Activated CD4-positive, alpha-beta memory T cell treated with anti-CD3 and anti-CD28 coated beads for 36 hours (primary cell): ENCODE measurements at regions of chr1 and their contacts with region 1.

Region 1: DNA sequence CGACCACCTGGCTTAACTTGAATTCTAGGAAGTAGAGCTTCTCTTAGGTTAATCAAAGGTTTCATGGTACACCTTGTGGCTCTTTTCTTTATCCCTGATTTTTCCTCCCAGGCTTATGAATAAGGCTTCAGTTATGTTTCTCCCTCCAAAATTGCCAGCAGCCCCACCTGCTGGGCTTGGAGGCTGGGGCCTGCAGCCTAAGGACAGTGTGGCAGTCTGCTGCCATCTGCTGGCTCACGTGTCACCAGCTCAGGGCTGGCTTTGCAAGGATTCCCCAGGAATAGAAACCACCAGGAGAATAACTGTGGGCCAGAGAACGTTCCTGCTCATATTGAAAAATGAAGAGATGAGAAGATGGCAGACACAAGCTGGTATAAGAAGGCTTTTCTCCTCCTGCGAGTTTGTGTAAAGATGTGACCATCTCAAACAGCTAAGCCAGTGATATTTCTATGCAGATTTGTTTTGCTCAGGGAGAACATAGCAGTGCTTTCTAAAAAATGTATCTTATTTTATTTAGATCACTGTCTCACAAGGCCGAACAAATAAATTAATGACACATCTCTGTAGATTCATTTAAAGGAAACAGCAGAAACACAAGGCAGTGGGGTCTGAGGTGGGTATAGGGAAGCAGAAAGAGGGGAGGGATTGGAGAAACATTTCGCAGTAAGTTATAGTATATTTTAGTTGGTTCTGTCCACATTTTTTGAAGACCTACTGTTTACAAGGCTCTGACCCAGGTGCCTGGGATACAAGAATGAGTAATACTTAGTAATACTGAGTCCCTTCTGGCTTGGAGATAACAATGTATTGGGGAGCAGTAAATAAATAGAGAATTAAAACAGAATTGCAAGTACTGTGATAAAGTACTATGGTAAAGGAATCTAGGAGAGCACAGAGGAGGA is 291.1 kb upstream of the SGIP1 start:
- DNase-seq: peak; percentile 84
- H3K4me3 Mint-ChIP-seq: no peak overlapping the region
- H3K27ac Mint-ChIP-seq: no peak overlapping the region
- H3K4me1 Mint-ChIP-seq: no peaks in the 10 kb centered on the region
- H3K27me3 Mint-ChIP-seq: peaks cover 6% of the 10 kb centered on the region

Region 2: DNA sequence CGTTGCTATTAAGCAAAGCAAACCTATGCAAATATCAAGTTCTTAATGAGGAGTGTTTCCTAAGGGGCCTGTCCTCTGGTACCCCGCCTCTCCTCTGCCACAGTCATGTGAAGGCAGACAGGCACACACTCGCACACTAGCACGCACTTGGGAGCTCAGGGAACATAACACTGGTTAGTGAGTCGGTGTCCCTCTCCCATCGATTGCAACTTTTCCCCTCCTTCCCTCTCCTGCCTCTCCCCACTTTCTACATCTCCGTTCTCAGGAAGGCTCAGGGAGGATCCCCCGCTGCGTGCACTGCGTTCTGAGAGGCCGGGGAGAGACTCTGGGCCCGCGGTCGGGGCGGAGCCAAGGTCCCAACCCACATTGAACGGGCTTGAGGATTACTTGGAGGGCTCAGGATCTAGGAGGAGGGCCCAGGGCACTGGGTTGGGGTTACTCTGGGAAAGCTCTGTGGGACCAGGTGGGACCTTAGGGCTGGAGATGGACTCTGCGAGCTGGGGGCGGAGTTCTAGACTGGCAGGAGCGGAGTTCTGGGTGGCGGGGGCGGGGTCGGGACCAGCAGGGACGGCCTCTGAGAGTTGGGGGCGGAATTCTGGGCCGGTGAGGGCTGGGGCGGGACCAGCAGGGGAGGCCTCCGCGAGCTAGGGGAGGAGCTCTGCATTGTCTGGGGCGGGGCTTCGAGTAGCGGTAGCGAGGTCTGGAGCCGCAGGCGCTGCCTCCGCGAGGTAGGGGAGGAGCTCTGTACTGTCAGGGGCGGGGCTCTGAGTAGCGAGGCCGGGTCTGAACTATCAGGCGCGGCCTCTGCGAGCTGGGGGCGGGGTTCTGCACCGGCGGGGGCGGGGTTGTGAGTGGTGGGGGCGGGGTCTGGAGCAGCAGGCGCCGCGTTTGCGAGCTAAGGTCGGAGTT is 823.0 kb before region 1 on chr1:
- CTCF ChIA-PET with region 1: no interaction called
- POLR2A ChIA-PET with region 1: no interaction called
- intact Hi-C with region 1: loop called (anchors 5 kb)
- DNase-seq: peak; percentile 99
- H3K4me3 Mint-ChIP-seq: peak overlapping the region; percentile 90
- H3K27ac Mint-ChIP-seq: peak overlapping the region; percentile 88
- H3K4me1 Mint-ChIP-seq: peaks cover 21% of the 10 kb centered on the region
- H3K27me3 Mint-ChIP-seq: no peaks in the 10 kb centered on the region

Region 3: GRCh38 chr1:65985393-65986066 is 257.4 kb before region 1 on chr1:
- CTCF ChIA-PET with region 1: interaction called, 27 read pairs
- POLR2A ChIA-PET with region 1: no interaction called
- intact Hi-C with region 1: no loop called
- DNase-seq: no peak
- H3K4me3 Mint-ChIP-seq: no peak overlapping the region
- H3K27ac Mint-ChIP-seq: no peak overlapping the region
- H3K4me1 Mint-ChIP-seq: no peaks in the 10 kb centered on the region
- H3K27me3 Mint-ChIP-seq: peaks cover 8% of the 10 kb centered on the region

Region 4: DNA sequence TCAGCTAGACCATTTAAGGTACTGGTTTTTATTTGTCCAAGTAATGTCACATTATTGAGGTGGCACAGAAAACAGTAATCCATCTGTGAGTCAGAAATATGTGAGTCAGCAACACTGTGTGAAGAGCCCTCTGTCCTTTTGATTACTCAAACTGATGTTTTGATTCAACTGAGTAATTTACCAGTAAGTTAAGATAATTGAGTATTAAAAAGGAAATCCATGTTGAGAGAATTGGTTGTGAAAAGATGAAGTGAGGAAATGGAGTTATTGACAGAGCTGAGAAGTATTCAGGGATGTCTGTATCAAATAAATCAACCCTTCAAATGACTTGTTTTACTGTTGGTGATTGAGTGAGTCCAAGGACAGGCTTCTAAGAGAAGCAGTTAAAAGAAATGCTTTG is 11.7 kb before region 1 on chr1:
- CTCF ChIA-PET with region 1: interaction called, 36 read pairs
- POLR2A ChIA-PET with region 1: interaction called, 10 read pairs
- intact Hi-C with region 1: loop called (anchors 1 kb)
- DNase-seq: no peak
- H3K4me3 Mint-ChIP-seq: no peak overlapping the region
- H3K27ac Mint-ChIP-seq: no peak overlapping the region
- H3K4me1 Mint-ChIP-seq: peaks cover 6% of the 10 kb centered on the region
- H3K27me3 Mint-ChIP-seq: peaks cover 15% of the 10 kb centered on the region

Region 5: GRCh38 chr1:66331657-66332547 is 89.0 kb after region 1 on chr1:
- CTCF ChIA-PET with region 1: interaction called, 15 read pairs
- POLR2A ChIA-PET with region 1: interaction called, 11 read pairs
- intact Hi-C with region 1: no loop called
- DNase-seq: peak; percentile 75
- H3K4me3 Mint-ChIP-seq: peak overlapping the region; percentile 93
- H3K27ac Mint-ChIP-seq: peak overlapping the region; percentile 96
- H3K4me1 Mint-ChIP-seq: peaks cover 48% of the 10 kb centered on the region
- H3K27me3 Mint-ChIP-seq: no peaks in the 10 kb centered on the region

Region 6: GRCh38 chr1:66402194-66402593 is 159.3 kb after region 1 on chr1:
- CTCF ChIA-PET with region 1: no interaction called
- POLR2A ChIA-PET with region 1: no interaction called
- intact Hi-C with region 1: loop called (anchors 1 kb)
- DNase-seq: no peak
- H3K4me3 Mint-ChIP-seq: no peak overlapping the region
- H3K27ac Mint-ChIP-seq: no peak overlapping the region
- H3K4me1 Mint-ChIP-seq: peaks cover 31% of the 10 kb centered on the region
- H3K27me3 Mint-ChIP-seq: no peaks in the 10 kb centered on the region